Colonic mucosa (tissue), 4 donors: ENCODE measurements at regions of chr3 and their contacts with region 1.

Region 1: DNA sequence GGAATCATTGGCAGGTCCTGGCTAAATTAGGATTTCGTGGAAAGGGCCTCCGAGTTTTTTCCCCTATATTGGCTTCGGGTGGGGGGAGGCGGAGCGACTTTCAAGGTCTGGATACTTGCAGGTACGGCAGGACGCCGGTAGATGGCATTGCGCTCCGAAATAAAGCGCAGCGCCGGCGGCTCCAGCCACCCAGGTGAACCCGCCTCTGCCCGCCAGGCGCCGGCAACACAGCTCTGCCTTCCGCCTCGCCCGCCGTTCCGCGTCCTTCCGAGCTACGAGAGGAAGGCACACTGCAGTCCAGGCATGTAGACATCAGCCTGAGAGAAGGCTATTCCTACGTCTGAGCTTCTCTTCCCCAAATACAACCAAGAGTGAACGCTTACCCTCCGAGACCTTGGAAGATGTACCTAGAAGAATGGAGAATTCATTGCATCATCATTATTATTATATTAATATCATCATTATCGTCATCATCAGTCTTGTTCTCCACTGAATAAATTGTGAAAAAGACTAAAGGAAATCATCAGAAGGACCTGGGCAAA is 514.1 kb downstream of the MECOM start:
- DNase-seq: peak; percentile 88
- H3K4me3 ChIP-seq: peak overlapping the region; percentile 19
- H3K27ac ChIP-seq: peak overlapping the region; percentile 78
- H3K4me1 ChIP-seq: no peaks in the 10 kb centered on the region
- H3K27me3 ChIP-seq: no peaks in the 10 kb centered on the region
- CTCF ChIP-seq: peak; percentile 70

Region 2: DNA sequence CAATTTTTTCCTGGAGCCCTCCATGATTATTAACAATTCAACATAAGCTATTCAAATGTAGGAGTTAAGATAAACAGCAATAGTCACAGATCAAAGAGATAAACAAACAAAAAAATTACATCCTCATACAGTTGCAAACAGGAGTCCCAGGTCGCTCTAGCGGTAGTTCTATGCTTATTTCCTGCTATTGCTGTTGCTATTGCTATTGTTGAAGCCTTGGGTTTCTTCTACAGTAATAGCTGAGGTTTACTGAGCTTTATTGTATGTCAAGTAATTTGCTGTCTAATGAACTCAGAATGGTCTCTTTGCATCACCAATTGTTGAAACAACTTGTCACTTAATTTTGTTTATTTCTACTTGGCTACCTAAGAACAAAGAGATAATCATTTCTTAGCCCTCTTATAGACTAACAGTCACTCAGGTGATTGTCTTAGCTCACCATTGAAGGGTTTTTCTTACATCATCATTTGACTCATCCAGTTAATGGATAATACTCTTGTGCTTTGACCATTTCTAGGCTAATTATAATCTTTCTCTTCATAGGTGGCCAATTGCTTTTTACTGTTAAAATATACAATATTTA is 140.6 kb before region 1 on chr3:
- intact Hi-C with region 1: no loop called
- DNase-seq: no peak
- H3K4me3 ChIP-seq: no peak overlapping the region
- H3K27ac ChIP-seq: no peak overlapping the region
- H3K4me1 ChIP-seq: no peaks in the 10 kb centered on the region
- H3K27me3 ChIP-seq: no peaks in the 10 kb centered on the region
- CTCF ChIP-seq: no peak

Region 3: DNA sequence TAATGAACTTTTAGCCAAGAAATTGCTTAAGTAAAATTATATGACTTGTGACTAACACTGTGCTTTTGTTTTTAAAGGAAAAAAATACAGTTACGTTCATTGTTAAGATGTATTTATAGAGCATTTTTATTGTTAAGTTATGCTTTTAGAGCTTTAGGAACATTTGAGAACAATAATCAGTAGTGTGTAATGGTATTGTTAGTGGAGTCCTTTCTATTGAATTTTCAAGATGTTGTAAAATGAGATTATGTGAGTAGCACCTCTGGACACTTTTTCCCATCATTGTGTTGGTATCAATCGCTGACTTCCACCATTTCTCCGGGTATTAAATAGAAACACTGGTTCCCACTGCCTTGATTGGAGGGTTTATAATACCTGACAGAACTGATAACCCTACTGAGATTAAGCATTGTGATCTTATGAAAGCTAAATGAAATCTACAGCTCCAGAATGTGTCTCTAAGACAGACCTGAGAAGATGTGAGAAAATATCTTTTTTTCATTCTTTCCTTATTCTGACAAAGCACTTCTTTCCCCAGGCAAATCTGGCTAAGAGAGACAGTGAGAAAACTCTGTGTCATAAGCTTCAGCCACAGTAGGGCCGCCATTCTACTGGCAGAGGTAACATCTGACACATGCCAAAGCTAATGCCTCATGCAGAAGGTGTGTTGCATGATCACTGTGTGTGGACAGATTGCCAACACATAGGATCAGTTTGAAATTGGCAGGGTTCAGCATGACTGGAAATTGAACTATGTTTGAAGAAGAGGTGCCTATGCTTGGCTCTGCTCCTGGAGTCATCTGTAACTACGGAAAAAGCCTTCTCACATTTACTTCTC is 96.7 kb before region 1 on chr3:
- intact Hi-C with region 1: no loop called
- DNase-seq: no peak
- H3K4me3 ChIP-seq: no peak overlapping the region
- H3K27ac ChIP-seq: no peak overlapping the region
- H3K4me1 ChIP-seq: no peaks in the 10 kb centered on the region
- H3K27me3 ChIP-seq: no peaks in the 10 kb centered on the region
- CTCF ChIP-seq: no peak

Region 4: GRCh38 chr3:169278092-169278491 is 128.7 kb after region 1 on chr3:
- intact Hi-C with region 1: loop called (anchors 10 kb)
- DNase-seq: no peak
- H3K4me3 ChIP-seq: no peak overlapping the region
- H3K27ac ChIP-seq: no peak overlapping the region
- H3K4me1 ChIP-seq: no peaks in the 10 kb centered on the region
- H3K27me3 ChIP-seq: no peaks in the 10 kb centered on the region
- CTCF ChIP-seq: no peak